HEK293 (cell line): ENCODE measurements at regions of chr1 and their contacts with region 1.

Region 1: GRCh38 chr1:165129568-165130164 is 226.8 kb downstream of the LMX1A start:
- H3K4me3 ChIP-seq: no peak overlapping the region
- H3K27ac ChIP-seq: no peak overlapping the region
- H3K4me1 ChIP-seq: no peaks in the 10 kb centered on the region
- CTCF ChIP-seq: peak; percentile 72

Region 2: DNA sequence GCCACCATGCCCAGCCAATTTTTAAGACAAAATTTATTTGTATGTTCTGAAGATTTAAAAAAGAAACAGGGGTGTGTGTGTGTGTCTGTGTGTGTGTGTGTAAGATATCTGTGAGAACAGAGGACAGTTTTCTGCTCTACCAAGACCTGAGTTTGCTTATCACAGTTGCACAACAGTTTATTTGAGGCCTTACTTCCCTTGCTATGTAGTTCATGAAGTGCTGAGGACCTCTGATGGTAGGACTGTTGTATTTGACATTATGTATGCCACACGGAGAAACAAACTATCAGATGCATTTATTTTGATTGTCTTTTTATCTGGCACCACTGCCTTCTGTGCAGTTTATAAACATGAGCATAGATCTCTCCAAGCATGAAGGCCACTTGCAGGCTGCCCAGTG is 215.5 kb before region 1 on chr1:
- CTCF ChIA-PET with region 1: no interaction called
- POLR2A ChIA-PET with region 1: no interaction called
- H3K4me3 ChIP-seq: no peak overlapping the region
- H3K27ac ChIP-seq: no peak overlapping the region
- H3K4me1 ChIP-seq: no peaks in the 10 kb centered on the region
- CTCF ChIP-seq: peak; percentile 21; the same call in 1 of the 2 replicates

Region 3: DNA sequence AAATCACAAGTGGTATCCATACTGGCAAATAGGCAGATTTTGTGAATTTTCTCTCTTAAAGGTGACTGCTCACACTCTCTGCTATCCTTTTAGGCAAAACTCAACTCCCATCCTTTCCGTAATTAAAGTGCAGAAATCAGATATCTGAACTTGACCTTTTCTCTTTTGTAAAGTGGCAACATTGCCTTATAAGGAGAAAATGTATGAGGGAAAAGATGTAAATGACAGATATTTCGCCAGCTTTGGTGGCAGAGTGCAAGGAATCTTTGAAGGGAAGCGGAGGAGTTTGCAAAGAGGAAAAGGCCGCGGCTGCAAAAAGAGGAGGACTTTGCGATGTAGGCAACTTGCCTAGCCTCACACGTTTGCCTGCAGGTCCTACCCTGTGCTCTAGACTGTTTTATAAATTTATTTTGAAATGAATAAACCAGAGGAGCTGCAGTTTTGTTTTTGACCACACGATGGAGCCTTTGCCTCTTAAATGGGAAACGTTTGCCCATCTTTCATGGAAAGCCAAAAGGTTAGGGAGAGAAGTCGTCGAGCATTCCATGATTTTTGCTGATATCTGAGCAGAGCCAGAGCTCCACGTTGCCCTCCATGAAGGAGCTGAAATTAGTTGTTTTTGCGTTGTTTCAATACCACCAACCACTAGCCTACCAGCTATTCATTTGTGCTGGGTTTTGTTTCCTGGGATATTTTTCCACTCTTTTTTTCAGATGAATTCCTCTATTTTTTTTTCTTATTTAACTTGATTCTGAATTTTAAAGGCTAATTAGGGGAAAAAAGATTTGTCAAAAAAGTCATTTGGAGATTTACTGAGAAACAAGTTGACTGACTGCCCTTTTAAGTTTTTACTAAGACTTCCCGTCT is 15.4 kb before region 1 on chr1:
- CTCF ChIA-PET with region 1: interaction called, 25 read pairs
- POLR2A ChIA-PET with region 1: no interaction called
- H3K4me3 ChIP-seq: no peak overlapping the region
- H3K27ac ChIP-seq: no peak overlapping the region
- H3K4me1 ChIP-seq: no peaks in the 10 kb centered on the region
- CTCF ChIP-seq: peak; percentile 24; the same call in 1 of the 2 replicates

Region 4: GRCh38 chr1:165144757-165145397 is 15.2 kb after region 1 on chr1:
- CTCF ChIA-PET with region 1: interaction called, 15 read pairs
- POLR2A ChIA-PET with region 1: no interaction called
- H3K4me3 ChIP-seq: no peak overlapping the region
- H3K27ac ChIP-seq: no peak overlapping the region
- H3K4me1 ChIP-seq: no peaks in the 10 kb centered on the region
- CTCF ChIP-seq: peak; percentile 55